Calu3 (cell line): ENCODE measurements at regions of chr2 and their contacts with region 1.

Region 1: DNA sequence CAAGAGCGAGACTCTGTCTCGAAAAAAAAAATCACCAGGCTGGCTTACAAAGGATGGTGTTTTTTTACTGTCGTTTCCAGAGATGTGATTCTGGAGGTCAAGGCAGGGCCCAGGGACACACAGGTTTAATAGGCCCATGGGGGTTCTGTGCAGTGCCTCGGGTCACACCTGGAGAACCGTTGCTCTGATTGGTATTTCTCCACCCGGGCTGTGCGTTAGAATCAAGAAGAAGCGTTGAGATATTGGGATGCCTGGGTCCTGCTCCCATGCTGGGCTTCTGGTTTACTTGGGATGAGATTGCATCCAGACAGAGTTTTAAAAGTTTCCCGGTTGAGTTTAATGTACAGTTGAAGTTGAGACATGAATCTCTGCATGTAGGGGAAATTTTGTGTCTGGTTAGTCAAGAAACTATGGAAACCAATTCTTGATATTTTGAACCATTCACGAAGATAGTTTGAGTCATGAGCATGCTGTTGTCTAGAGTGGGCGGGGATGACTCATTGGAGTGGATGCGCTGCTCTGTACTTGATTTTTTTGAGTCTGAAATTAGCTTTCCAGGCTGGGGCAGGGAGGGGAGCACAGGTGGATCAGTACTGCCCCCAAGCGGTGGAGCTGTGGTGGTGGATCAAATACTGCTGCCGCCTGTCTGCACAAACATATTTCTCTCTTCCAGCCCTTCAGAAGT is 50.1 kb downstream of the GREB1 start:
- DNase-seq: peak; percentile 83
- H3K4me3 Mint-ChIP-seq: no peak overlapping the region
- H3K27ac Mint-ChIP-seq: no peak overlapping the region
- H3K4me1 Mint-ChIP-seq: no peaks in the 10 kb centered on the region
- H3K27me3 Mint-ChIP-seq: peaks cover 54% of the 10 kb centered on the region
- CTCF ChIP-seq: peak; percentile 86

Region 2: DNA sequence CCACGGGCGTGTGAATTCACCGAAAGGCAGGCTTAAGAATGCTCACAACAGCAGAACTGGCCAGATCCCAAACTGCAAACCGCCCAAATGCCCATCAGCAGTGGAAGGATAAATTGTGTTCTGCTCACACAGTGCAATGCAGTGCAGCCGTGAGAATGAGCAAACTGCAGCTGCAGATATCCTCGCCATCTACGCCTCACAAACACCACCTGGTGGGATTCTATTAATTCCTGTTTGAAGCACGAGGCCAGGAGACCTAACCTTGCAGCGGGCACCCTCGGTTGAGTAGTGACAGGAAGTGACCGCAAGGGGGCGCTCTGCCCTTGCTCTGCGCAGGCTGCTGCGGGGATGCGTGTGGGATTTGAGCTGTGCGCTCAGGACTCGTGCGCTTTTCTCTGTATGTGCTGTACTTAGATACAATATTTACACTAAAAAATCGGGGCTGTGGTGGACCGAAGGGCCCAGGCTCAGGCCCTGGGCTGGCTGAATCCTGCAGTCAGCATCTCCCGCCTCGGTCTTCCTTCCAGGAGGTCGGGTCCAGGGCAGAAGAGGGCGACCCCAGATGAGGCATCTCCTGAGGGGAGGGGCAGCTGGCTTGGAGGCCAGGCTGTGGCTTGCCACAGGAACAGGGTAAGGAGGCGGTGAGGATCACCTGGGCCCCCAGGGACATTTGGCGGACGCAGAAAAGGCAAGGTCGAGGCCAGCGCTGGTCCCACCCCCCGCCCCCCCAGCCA is 751.6 kb before region 1 on chr2:
- CTCF ChIA-PET with region 1: interaction called, 5 read pairs
- intact Hi-C with region 1: loop called (anchors 10 kb)
- DNase-seq: peak; percentile 87
- H3K4me3 Mint-ChIP-seq: no peak overlapping the region
- H3K27ac Mint-ChIP-seq: no peak overlapping the region
- H3K4me1 Mint-ChIP-seq: no peaks in the 10 kb centered on the region
- H3K27me3 Mint-ChIP-seq: peaks cover 72% of the 10 kb centered on the region
- CTCF ChIP-seq: peak; percentile 97

Region 3: DNA sequence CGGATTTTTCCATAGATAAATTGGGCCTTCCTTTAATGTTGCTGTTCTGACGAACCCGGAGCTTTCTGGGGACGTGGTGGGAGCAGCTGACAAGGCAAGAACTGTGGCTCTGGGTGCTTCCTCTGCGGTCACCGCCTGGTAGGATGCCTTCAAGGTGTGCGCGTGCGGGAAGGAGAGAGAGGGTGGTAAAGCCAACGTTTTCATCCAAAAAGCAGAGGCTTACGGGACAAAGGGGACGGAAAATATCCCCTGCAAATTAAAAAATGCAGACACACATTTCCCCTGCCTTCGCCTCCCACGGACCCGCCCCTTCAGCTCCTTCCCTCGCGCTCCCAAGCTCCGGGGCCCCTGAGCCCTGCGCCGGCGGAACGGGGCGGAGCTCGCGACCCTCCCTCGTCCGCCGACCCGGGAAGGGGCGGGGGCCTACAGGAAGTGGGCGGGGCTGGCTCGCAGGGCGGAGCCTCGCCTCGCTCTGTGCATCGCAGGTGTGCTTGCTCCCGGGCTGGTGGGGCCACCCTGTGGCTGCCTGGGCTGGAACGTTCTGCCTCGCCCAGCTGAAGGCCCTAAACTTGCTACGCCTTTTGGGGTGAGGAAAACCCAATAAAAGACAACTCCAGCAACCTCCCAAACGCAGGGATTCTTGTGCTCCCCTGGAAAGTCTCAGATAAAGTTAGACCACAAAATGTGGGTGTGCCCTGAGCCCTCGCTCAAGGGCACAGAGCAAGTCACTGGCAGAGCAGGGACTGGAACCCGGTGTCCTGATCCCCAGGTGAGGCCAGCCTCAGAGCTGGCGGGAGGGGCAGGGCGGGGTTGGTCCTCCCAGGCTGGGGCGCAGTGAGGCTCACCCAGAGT is 454.2 kb before region 1 on chr2:
- CTCF ChIA-PET with region 1: interaction called, 12 read pairs
- intact Hi-C with region 1: loop called (anchors 2 kb)
- DNase-seq: peak; percentile 84
- H3K4me3 Mint-ChIP-seq: peak overlapping the region; percentile 21
- H3K27ac Mint-ChIP-seq: no peak overlapping the region
- H3K4me1 Mint-ChIP-seq: peaks cover 14% of the 10 kb centered on the region
- H3K27me3 Mint-ChIP-seq: peaks cover 35% of the 10 kb centered on the region
- CTCF ChIP-seq: no peak

Region 4: GRCh38 chr2:11234309-11234708 is 349.7 kb before region 1 on chr2:
- CTCF ChIA-PET with region 1: interaction called, 3 read pairs
- intact Hi-C with region 1: loop called (anchors 1 kb)
- DNase-seq: no peak
- H3K4me3 Mint-ChIP-seq: no peak overlapping the region
- H3K27ac Mint-ChIP-seq: no peak overlapping the region
- H3K4me1 Mint-ChIP-seq: no peaks in the 10 kb centered on the region
- H3K27me3 Mint-ChIP-seq: no peaks in the 10 kb centered on the region
- CTCF ChIP-seq: no peak

Region 5: DNA sequence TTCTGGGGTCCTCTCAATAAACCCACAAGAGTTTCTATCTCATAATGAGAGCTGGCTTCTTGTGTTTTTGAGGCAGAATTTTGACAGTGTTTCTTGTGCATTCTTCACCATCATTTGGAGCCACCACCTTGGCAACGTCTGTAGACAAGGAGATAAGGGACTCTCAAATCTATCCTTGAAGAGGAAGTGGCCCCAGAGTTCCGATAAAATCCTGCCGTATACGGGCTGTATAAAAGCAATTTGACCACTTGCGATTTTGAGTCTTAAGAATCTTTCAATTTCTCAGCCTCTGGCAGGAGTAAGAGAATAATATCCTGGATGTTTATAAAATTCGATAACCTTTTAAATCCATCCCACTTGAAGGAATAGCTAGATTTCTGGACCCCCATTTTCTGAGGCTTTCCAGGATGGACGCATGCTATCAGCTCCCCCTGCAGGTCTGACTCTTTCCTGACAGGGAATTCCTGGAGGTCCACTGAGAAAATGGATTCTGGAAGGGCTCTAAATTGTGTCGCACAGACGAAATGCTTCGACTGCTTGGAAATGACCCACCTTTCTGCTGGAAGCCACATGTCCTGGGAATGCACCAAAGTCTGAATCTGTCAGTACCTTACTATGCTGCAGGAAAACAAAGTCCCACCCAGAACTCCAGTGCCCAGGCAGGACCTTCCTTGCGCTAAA is 172.1 kb before region 1 on chr2:
- CTCF ChIA-PET with region 1: no interaction called
- intact Hi-C with region 1: loop called (anchors 5 kb)
- DNase-seq: peak; percentile 70
- H3K4me3 Mint-ChIP-seq: peak overlapping the region; percentile 50
- H3K27ac Mint-ChIP-seq: no peak overlapping the region
- H3K4me1 Mint-ChIP-seq: peaks cover 12% of the 10 kb centered on the region
- H3K27me3 Mint-ChIP-seq: peaks cover 19% of the 10 kb centered on the region
- CTCF ChIP-seq: peak; percentile 85

Region 6: DNA sequence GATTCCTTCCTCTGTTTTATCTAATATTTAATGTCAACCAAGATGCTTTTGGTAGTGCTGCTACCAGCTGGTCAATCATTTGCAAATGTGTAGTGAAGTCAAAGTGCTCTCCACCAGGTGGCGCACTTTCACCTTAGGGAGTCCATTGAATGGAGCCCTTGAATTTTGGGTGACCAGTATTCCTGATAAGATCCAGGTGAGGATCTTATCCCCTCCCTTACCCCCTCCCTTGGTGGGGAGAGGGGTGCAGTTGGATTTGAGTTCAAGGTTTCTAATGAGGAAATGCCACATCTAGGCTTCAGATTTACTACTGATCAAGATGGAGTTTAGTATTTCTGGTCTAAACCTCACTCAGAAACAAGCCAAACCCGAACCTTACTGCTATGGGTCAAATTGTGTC is 106.0 kb before region 1 on chr2:
- CTCF ChIA-PET with region 1: interaction called, 32 read pairs
- intact Hi-C with region 1: loop called (anchors 1 kb)
- DNase-seq: peak; percentile 88
- H3K4me3 Mint-ChIP-seq: no peak overlapping the region
- H3K27ac Mint-ChIP-seq: no peak overlapping the region
- H3K4me1 Mint-ChIP-seq: peaks cover 3% of the 10 kb centered on the region
- H3K27me3 Mint-ChIP-seq: peaks cover 34% of the 10 kb centered on the region
- CTCF ChIP-seq: peak; percentile 64

Region 7: DNA sequence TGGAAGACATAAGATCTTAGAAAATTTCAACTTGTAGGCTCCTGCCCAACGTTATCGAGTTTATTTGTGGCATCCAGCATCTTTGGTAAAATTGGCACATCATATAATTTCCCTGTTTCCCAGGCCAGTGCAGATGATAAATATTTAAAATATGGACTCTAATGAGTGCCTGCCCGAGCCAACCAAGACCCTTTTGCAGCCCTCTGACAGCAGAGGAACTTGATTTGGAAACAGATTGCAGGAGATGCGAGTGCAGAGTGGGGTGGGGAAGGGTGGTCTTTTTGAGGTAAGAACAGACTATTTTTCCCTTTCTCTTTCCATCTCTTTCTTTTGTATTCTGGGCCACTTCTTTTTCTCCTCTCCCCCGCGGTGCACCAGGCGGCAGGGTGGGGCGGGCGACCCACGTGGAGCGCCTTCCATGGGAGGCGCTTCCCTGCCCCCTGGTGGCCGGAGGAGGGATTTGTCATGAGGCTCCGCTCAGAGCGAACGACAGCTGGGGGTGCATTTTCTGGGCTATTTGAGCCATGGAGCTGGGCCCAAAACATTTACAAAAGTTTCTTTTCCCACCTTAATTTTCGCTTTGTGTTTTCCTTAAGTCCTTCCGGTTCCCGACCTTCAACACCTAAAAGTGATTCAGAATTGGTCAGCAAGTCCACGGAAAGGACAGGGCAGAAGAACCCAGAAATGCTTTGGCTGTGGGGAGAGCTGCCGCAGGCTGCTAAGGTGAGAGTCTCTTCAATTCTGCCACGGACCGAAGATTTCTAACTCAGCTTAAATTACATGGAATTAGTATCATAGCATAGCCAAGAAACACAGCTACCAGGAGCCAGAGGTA is 195.2 kb after region 1 on chr2:
- CTCF ChIA-PET with region 1: no interaction called
- intact Hi-C with region 1: loop called (anchors 10 kb)
- DNase-seq: peak; percentile 88
- H3K4me3 Mint-ChIP-seq: no peak overlapping the region
- H3K27ac Mint-ChIP-seq: no peak overlapping the region
- H3K4me1 Mint-ChIP-seq: peaks cover 21% of the 10 kb centered on the region
- H3K27me3 Mint-ChIP-seq: no peaks in the 10 kb centered on the region
- CTCF ChIP-seq: peak; percentile 95